Calu3 (cell line): ENCODE measurements at regions of chr2 and their contacts with region 1.

Region 1: GRCh38 chr2:127197475-127198385 is 22.4 kb downstream of the CYP27C1 start:
- DNase-seq: peak; percentile 87
- H3K4me3 Mint-ChIP-seq: peak overlapping the region; percentile 75
- H3K27ac Mint-ChIP-seq: peak overlapping the region; percentile 2
- H3K4me1 Mint-ChIP-seq: peaks cover 8% of the 10 kb centered on the region
- H3K27me3 Mint-ChIP-seq: peaks cover 26% of the 10 kb centered on the region
- CTCF ChIP-seq: peak; percentile 41

Region 2: DNA sequence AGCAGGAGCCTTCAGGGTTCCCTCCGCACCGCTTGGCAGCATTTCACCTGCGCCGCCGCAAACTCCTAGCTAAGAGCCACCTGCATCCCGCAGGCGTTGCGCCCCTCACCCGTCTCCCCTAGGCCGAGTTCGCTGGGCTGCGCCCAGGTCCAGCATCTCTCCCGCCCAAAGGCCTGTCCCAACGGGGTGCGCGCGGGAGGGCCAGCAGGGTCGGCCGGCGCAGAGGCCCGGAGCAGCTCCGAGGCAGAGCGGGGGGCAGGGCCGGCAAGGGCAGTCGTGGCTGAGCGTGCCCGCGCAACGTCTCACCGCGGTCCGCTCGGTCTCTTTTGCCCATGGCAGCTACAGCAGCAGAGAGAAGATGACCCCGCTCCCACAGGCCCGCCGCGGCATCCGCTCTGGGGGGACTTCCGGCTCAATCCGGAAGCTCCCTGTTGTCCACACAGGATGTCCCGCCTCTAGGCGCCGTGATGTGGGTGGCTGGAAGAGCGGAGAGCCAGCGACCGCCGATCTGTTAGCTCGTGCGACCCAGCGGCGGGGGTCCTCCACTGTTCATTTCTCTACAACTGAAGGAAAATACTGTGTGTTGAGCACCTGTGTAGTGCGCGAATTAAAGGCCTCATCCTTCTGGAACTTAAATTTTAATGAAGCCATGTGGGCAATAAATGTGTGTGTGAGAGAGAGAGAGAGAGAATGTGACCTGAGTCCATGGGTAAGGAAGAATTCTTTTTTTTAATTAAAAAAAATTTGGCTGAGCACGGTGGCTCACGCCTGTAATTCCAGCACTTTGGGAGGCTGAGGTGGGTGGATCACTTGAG is 96.2 kb after region 1 on chr2 and contains the start of gene ERCC3:
- CTCF ChIA-PET with region 1: interaction called, 39 read pairs
- intact Hi-C with region 1: loop called (anchors 2 kb)
- DNase-seq: peak; percentile 84
- H3K4me3 Mint-ChIP-seq: peak within 1 kb of the TSS; percentile 84
- H3K27ac Mint-ChIP-seq: peak within 1 kb of the TSS; percentile 83
- H3K4me1 Mint-ChIP-seq: peaks cover 18% of the 10 kb centered on the region
- H3K27me3 Mint-ChIP-seq: no peaks in the 10 kb centered on the region
- CTCF ChIP-seq: no peak
- total RNA-seq, gene ERCC3: 41.3 and 42.1 TPM in 2 replicates

Region 3: DNA sequence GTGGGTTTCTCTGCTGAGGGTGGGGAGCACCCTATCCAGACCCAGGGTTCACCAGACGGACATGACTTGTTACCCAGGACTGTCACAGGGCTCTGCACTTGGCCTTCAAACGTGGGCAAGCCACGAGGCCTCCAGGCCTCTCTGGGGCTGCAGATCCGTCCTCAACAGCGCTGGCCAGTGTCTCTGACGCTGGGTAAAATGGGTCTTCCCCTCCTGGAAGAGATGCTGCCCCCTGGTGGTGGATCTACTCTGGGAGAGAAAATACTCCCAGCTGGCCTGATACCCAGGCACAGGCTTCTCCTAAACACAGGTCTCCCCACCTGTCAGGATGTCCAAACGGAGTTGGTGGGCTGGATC is 451.9 kb after region 1 on chr2:
- CTCF ChIA-PET with region 1: interaction called, 6 read pairs
- intact Hi-C with region 1: loop called (anchors 5 kb)
- DNase-seq: peak; percentile 92
- H3K4me3 Mint-ChIP-seq: no peak overlapping the region
- H3K27ac Mint-ChIP-seq: no peak overlapping the region
- H3K4me1 Mint-ChIP-seq: no peaks in the 10 kb centered on the region
- H3K27me3 Mint-ChIP-seq: peaks cover 39% of the 10 kb centered on the region
- CTCF ChIP-seq: peak; percentile 80

Region 4: GRCh38 chr2:127884436-127885345 is 687.0 kb after region 1 on chr2:
- CTCF ChIA-PET with region 1: no interaction called
- intact Hi-C with region 1: no loop called
- DNase-seq: no peak
- H3K4me3 Mint-ChIP-seq: peak overlapping the region; percentile 92
- H3K27ac Mint-ChIP-seq: peak overlapping the region; percentile 92
- H3K4me1 Mint-ChIP-seq: peaks cover 25% of the 10 kb centered on the region
- H3K27me3 Mint-ChIP-seq: no peaks in the 10 kb centered on the region
- CTCF ChIP-seq: no peak